H1 (cell line): ENCODE measurements at regions of chr22 and their contacts with region 1.

Region 1: DNA sequence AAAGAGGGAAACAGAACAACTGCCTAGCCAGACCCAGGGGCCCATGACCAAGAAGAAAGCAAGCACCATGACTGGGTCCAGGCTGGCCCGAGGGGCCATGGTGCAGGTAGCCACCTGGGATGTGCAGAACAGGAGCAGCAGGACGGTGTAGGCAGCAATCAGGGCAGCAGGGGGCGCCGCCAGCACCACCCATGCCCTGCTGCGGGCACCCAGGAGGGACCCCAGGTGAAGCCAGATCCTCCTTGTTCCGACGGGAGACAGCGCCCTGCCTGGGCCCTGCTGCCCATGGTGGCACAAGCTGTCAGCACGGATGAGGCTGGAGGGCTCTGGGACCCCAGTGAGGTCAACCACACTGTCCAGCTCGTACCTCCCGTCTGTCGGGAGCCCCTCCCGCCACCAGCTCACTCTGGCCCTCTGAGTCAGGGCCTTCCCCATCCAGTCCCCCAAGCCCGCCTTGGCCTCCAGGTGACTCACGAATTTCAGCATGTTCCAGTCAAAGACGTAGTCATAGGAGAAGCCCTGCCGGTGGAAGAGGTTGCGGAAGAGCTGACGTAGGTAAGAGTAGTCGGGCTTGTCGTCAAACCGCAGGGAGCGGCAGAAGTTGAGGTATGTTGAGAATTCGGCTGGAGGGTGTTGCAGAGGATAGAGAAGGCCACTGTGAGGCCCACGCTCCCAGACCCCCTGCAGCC is 18.8 kb downstream of the CSNK1E start:
- DNase-seq: no peak
- H3K4me3 ChIP-seq: no peak overlapping the region
- H3K27ac ChIP-seq: no peak overlapping the region
- H3K4me1 ChIP-seq: no peaks in the 10 kb centered on the region; a peak in 1 of 7 replicates
- H3K27me3 ChIP-seq: no peaks in the 10 kb centered on the region
- CTCF ChIP-seq: peak; percentile 54 to 90 (median 82)
- EP300 ChIP-seq: no peak
- POLR2A ChIP-seq: no peak
- RAD21 ChIP-seq: peak; percentile 49 to 67; a peak in 3 of 4 replicates

Region 2: GRCh38 chr22:38262051-38262795 is 36.2 kb before region 1 on chr22:
- CTCF ChIA-PET with region 1: interaction called, 12 read pairs
- POLR2A ChIA-PET with region 1: interaction called, 4 read pairs
- DNase-seq: peak in 1 of 2 experiments; percentile 84
- H3K4me3 ChIP-seq: no peak overlapping the region
- H3K27ac ChIP-seq: no peak overlapping the region
- H3K4me1 ChIP-seq: peaks cover 4 to 24% (median 10%) of the 10 kb centered on the region in 4 experiments
- H3K27me3 ChIP-seq: no peaks in the 10 kb centered on the region; a peak in 1 of 7 replicates
- CTCF ChIP-seq: peak; percentile 73 to 85 (median 80)
- EP300 ChIP-seq: no peak
- POLR2A ChIP-seq: no peak
- RAD21 ChIP-seq: peak; percentile 74

Region 3: GRCh38 chr22:38284042-38284402 is 14.4 kb before region 1 on chr22:
- CTCF ChIA-PET with region 1: interaction called, 17 read pairs
- POLR2A ChIA-PET with region 1: interaction called, 16 read pairs
- DNase-seq: no peak
- H3K4me3 ChIP-seq: no peak overlapping the region
- H3K27ac ChIP-seq: no peak overlapping the region
- H3K4me1 ChIP-seq: peaks cover 0 to 3% (median 1%) of the 10 kb centered on the region in 4 experiments; a peak in 3 of 7 replicates
- H3K27me3 ChIP-seq: no peaks in the 10 kb centered on the region
- CTCF ChIP-seq: no peak
- EP300 ChIP-seq: no peak
- POLR2A ChIP-seq: no peak
- RAD21 ChIP-seq: no peak

Region 4: GRCh38 chr22:38311323-38311620 is 12.8 kb after region 1 on chr22:
- CTCF ChIA-PET with region 1: interaction called, 24 read pairs
- POLR2A ChIA-PET with region 1: interaction called, 10 read pairs
- DNase-seq: no peak
- H3K4me3 ChIP-seq: no peak overlapping the region
- H3K27ac ChIP-seq: no peak overlapping the region
- H3K4me1 ChIP-seq: peaks cover 9 to 36% (median 26%) of the 10 kb centered on the region in 4 experiments
- H3K27me3 ChIP-seq: no peaks in the 10 kb centered on the region
- CTCF ChIP-seq: no peak
- EP300 ChIP-seq: no peak
- POLR2A ChIP-seq: no peak
- RAD21 ChIP-seq: no peak

Region 5: GRCh38 chr22:38327805-38328204 is 29.3 kb after region 1 on chr22:
- CTCF ChIA-PET with region 1: interaction called, 7 read pairs
- POLR2A ChIA-PET with region 1: interaction called, 12 read pairs
- DNase-seq: no peak
- H3K4me3 ChIP-seq: no peak overlapping the region
- H3K27ac ChIP-seq: peak overlapping the region; percentile 60
- H3K4me1 ChIP-seq: peaks cover 14 to 36% (median 29%) of the 10 kb centered on the region in 4 experiments
- H3K27me3 ChIP-seq: no peaks in the 10 kb centered on the region
- CTCF ChIP-seq: no peak
- EP300 ChIP-seq: no peak
- POLR2A ChIP-seq: no peak
- RAD21 ChIP-seq: no peak

Region 6: DNA sequence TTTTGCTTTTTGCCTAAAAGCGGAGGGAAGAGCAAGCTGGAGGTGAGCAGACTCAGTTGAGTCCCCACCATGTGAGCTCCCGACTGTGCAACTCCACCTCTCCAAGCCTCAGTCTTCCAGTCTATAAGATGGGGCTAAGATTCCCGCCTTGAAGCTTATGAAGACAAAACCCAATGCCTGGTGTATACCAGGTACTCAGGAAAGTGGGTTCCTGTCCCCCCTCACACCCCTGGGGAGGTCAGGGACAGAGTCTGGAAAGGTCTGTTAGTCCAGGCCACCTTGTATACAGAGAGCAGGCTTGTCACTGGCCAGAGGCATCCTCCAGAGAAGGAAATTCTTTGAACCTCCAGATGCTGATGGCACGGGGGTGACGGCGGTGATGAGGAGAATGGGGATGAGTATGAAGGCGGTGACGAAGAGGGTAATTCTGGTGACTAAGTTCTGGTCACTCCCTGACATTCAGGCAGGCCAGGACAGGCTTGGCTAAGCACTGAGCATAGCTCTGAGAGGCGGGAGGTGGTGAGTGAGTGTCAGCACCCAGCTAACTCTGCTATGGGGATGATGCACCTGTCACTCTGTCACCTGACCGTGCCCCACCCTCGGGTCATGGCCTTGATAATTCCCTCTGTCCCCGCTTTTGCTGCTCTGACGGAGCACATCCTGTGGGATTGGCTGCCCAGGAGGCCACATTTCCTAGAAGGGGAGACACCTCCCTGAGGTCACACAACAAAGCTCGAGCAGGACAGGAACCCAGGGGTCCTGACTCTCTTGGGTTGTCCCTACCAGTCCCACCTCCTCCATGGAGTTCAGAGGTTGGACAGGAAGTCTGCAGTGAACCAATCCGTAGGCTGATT is 49.7 kb after region 1 on chr22:
- CTCF ChIA-PET with region 1: interaction called, 31 read pairs
- POLR2A ChIA-PET with region 1: interaction called, 4 read pairs
- DNase-seq: peak in 1 of 2 experiments; percentile 52
- H3K4me3 ChIP-seq: no peak overlapping the region
- H3K27ac ChIP-seq: no peak overlapping the region
- H3K4me1 ChIP-seq: peaks cover 0 to 25% (median 4%) of the 10 kb centered on the region in 4 experiments; a peak in 6 of 7 replicates
- H3K27me3 ChIP-seq: no peaks in the 10 kb centered on the region
- CTCF ChIP-seq: no peak
- EP300 ChIP-seq: no peak
- POLR2A ChIP-seq: no peak
- RAD21 ChIP-seq: no peak

Region 7: GRCh38 chr22:38422611-38423511 is 124.4 kb after region 1 on chr22:
- CTCF ChIA-PET with region 1: no interaction called
- POLR2A ChIA-PET with region 1: no interaction called
- DNase-seq: no peak
- H3K4me3 ChIP-seq: peak overlapping the region in 1 of 4 experiments; percentile 8; a peak in 1 of 8 replicates
- H3K27ac ChIP-seq: no peak overlapping the region
- H3K4me1 ChIP-seq: peaks cover 3 to 21% (median 11%) of the 10 kb centered on the region in 4 experiments; a peak in 6 of 7 replicates
- H3K27me3 ChIP-seq: no peaks in the 10 kb centered on the region
- CTCF ChIP-seq: no peak
- EP300 ChIP-seq: no peak
- POLR2A ChIP-seq: no peak
- RAD21 ChIP-seq: no peak

Region 8: DNA sequence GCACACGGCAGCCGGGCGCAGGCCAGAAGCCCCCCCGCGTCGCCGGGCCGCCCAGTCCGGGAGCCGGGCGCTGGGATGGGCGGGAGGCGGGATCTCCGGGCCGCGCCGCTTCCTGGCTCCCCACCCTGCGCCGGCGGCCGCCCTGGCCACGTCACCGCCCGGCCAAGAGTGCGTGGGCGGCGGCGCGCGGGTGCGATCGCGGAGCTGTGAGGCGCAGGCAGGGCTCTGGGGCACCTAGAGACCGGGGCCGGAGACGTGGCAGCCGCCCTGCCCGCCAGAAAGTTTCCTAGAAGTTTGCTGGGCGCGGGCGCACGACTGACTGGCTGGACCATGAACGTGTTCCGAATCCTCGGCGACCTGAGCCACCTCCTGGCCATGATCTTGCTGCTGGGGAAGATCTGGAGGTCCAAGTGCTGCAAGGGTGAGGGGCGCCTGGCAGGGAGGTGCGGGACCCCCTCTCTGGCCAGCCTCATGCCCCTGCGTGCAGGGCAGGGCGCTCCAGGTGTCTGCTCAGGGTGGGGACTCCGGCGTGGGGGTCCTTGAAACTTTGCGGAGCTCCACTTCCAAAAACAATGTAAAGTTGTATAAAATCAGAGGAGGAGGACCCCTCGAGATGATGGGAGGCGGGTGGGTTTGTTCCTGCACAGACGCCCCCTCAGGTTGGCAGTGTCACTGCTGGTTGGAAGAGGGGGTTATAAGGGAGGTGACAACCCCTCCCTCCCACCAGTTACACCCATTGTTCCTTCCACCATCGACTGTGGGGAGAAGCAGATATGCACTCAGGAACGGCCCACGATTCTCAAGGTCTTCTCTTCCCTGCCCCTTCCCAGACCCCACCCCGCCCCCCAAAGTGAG is 169.7 kb after region 1 on chr22 and contains the start of gene KDELR3:
- CTCF ChIA-PET with region 1: no interaction called
- POLR2A ChIA-PET with region 1: no interaction called
- DNase-seq: no peak
- H3K4me3 ChIP-seq: peak within 1 kb of the TSS; percentile 44 to 69 (median 62)
- H3K27ac ChIP-seq: no peak within 1 kb of the TSS
- H3K4me1 ChIP-seq: peaks cover 0 to 13% (median 9%) of the 10 kb centered on the region in 4 experiments; a peak in 5 of 7 replicates
- H3K27me3 ChIP-seq: peaks cover 0 to 24% (median 12%) of the 10 kb centered on the region in 4 experiments; a peak in 6 of 7 replicates
- CTCF ChIP-seq: peak; percentile 28 to 60 (median 56); a peak in 3 of 4 replicates
- EP300 ChIP-seq: no peak
- POLR2A ChIP-seq: no peak
- RAD21 ChIP-seq: no peak; a peak in 1 of 4 replicates
- total RNA-seq, gene KDELR3: 7.8 and 7.9 TPM in 2 replicates